ENCODE measurements at regions of chr1 and their contacts with region 1.

Region 1: GRCh38 chr1:47409311-47410070 is 6.6 kb upstream of the FOXE3 start:
- DNase-seq: peak; percentile 41
- H3K4me3 ChIP-seq: no peak overlapping the region
- CTCF ChIP-seq: no peak

Region 2: GRCh38 chr1:47367651-47368050 is 41.8 kb before region 1 on chr1:
- CTCF ChIA-PET with region 1: no interaction called
- POLR2A ChIA-PET with region 1: no interaction called
- DNase-seq: no peak
- H3K4me3 ChIP-seq: no peak overlapping the region
- CTCF ChIP-seq: no peak

Region 3: GRCh38 chr1:47399138-47399845 is 10.2 kb before region 1 on chr1:
- CTCF ChIA-PET with region 1: interaction called, 24 read pairs
- POLR2A ChIA-PET with region 1: no interaction called
- DNase-seq: no peak
- H3K4me3 ChIP-seq: no peak overlapping the region
- CTCF ChIP-seq: no peak

Region 4: DNA sequence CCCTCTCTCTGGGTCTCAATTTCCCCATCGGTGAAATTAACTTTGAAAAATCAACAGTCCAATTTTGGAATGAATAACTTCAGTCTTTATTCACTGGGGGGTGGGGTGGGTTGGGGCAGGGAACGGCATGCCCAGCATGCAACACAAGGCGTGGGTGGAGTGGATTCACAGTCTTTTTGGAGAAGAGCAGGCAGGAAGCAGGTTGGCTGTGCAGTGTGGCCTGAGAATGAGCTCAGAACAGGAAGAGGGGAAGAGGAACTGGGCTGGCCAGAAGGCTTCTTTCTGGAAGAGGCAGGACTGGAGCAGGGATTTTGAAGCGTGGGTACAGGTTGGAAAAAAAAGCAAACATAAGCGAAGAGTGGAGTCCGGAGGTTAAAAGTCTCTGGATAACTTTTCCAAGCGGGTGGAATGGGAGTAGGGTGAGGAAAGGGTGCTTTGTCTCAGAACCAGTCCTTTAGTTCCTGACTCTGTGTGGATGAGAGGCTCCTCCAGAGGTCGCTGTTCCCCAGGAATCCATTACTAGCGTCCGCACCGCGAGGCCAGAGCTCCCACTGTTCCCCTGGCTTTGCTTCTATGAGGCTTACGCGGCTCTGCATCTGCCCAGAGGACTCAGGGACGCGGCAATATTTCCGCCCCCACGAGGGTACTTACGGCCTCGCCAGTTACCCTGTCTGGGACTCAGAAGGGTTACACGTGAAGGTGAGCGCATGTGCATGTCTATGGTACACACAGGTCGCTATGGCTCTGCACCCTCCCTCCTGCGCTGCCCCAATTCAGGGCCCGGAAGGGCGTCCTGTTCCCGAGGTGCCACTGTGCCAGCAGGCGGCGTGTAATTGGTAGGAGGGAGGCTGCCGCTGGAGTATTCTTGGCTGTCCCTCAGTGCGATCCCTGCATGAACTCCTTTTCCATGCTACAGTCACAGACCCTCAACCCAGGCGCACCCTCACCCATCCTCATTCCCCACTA is 22.9 kb after region 1 on chr1:
- CTCF ChIA-PET with region 1: interaction called, 87 read pairs
- POLR2A ChIA-PET with region 1: interaction called, 3 read pairs
- DNase-seq: no peak
- H3K4me3 ChIP-seq: peak overlapping the region; percentile 33
- CTCF ChIP-seq: peak; percentile 87

Region 5: DNA sequence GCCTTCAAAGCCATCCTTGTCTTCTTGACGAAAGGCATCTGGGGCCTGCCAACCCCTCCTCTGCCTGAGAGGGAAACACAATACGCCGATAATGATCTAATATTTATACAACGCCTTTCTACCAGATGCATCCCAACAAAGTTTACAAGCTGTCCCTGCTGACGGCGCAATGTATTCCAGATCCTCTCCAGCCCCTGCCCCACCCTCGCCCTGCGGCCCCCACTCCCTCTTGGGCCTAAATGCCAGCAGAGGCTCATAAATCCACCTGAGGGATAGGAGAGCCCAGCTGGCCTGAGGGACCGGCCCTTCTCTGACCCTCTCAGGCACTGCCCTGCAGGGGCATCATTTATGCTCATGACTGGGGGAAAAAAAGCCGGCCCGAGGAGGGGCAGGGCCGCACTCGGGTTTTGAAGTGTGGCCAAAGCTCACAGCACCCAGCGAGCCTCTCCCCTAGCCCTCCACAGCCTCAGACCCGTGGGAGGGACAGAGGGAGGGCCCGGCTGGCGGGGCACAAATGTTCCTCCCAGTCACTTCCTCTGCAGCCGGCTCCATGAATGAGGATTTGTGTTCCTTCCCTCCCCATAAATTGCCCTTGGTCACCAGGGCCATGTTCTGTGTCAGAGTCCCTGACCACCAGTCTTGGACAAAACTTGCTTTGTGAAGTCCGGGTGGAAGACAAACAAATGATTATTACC is 168.7 kb after region 1 on chr1:
- CTCF ChIA-PET with region 1: no interaction called
- POLR2A ChIA-PET with region 1: no interaction called
- DNase-seq: no peak
- H3K4me3 ChIP-seq: no peak overlapping the region
- CTCF ChIP-seq: no peak